MCF 10A (cell line): ENCODE measurements at regions of chr11 and their contacts with region 1.

Region 1: GRCh38 chr11:104060820-104061219 is 24.4 kb downstream of the DDI1 start:
- DNase-seq: no peak
- H3K4me3 Mint-ChIP-seq: no peak overlapping the region
- H3K27ac Mint-ChIP-seq: no peak overlapping the region
- H3K4me1 Mint-ChIP-seq: peaks cover 25% of the 10 kb centered on the region
- H3K27me3 Mint-ChIP-seq: no peaks in the 10 kb centered on the region
- CTCF ChIP-seq: no peak

Region 2: DNA sequence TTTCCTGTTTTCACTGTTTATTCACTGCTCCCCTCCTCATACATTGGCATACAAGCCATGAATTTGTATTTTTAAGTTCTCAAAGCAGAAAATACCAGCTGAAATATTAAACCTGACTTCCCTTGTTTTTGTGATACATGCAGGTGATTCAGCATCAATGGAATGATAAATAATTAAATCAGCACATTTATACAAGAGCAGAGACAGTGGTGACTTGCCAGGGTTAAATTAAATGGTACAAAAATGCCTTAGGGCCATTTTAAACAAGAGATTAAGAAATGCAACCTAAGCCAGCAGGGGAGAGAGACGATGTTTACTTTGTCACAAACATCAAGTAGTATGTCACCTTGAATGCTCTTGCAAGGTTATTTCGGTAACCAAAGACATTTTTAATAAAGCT is 120.3 kb before region 1 on chr11:
- CTCF ChIA-PET with region 1: no interaction called
- POLR2A ChIA-PET with region 1: interaction called, 11 read pairs
- intact Hi-C with region 1: no loop called
- DNase-seq: peak; percentile 39
- H3K4me3 Mint-ChIP-seq: no peak overlapping the region
- H3K27ac Mint-ChIP-seq: peak overlapping the region; percentile 57
- H3K4me1 Mint-ChIP-seq: peaks cover 26% of the 10 kb centered on the region
- H3K27me3 Mint-ChIP-seq: no peaks in the 10 kb centered on the region
- CTCF ChIP-seq: no peak

Region 3: DNA sequence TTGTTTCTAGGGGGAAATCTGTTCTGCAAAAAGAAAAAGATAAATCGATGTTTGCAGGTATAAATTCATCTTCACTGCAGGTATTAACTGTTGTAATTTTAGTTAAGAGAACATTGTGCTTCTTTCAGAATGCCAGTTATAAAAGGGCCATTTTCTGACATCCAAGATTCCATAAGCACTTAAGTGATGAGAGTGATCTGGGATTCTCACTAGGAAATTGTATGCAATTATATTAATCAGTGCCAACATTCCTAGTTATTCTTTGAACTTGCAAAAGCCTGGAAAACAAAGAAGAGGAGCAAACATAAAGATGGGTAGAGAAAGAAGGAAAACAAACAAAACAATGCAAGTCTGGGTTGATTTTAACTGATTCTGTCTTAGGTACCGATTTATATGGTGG is 19.0 kb before region 1 on chr11:
- CTCF ChIA-PET with region 1: no interaction called
- POLR2A ChIA-PET with region 1: no interaction called
- intact Hi-C with region 1: no loop called
- DNase-seq: no peak
- H3K4me3 Mint-ChIP-seq: no peak overlapping the region
- H3K27ac Mint-ChIP-seq: no peak overlapping the region
- H3K4me1 Mint-ChIP-seq: no peaks in the 10 kb centered on the region
- H3K27me3 Mint-ChIP-seq: no peaks in the 10 kb centered on the region
- CTCF ChIP-seq: no peak

Region 4: DNA sequence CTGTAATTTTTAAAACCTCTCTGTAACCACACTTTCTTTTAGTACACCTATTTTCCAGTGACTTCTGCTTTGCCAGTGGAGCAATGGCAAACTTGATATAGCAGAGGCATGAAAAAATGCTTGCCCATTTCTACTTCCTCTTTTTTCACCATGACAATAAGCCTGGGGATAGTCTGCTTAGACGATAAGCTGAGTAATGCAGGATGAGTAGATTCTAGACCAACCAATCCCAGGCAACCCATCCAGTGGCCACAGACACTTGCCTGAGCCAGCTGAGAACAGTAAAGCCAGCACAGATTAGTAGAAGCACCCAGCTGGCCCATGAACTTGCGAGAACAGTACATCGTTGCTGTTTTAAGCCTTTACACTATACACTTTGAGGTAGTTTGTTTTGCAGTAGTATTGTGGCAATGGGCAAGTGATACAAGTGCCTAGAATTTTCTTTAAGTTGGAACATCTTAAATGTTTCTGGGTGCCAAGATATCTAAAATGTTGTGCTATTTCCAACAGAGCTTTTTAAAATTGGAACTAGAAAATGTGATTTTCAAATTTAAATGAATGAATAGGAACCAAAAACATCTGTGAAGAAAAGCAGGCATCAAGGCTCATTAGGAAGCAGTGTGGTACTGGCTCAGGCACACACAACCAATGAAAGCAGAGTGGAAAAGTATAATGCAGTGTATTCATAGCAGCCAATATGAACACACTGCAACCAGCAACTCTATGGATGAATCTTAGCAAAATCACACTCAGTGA is 13.3 kb after region 1 on chr11:
- CTCF ChIA-PET with region 1: interaction called, 3 read pairs
- POLR2A ChIA-PET with region 1: interaction called, 20 read pairs
- intact Hi-C with region 1: no loop called
- DNase-seq: peak; percentile 50
- H3K4me3 Mint-ChIP-seq: no peak overlapping the region
- H3K27ac Mint-ChIP-seq: no peak overlapping the region
- H3K4me1 Mint-ChIP-seq: peaks cover 28% of the 10 kb centered on the region
- H3K27me3 Mint-ChIP-seq: no peaks in the 10 kb centered on the region
- CTCF ChIP-seq: no peak